ENCODE measurements at regions of chr4 and their contacts with region 1.

Region 1: GRCh38 chr4:2226261-2226660 is 15.7 kb downstream of the HAUS3 start:
- DNase-seq: no peak
- ATAC-seq: no peak
- H3K4me3 ChIP-seq: no peak overlapping the region
- H3K27ac ChIP-seq: no peak overlapping the region
- H3K4me1 ChIP-seq: no peaks in the 10 kb centered on the region
- H3K27me3 ChIP-seq: no peaks in the 10 kb centered on the region
- CTCF ChIP-seq: no peak
- EP300 ChIP-seq: no peak
- POLR2A ChIP-seq: no peak
- RAD21 ChIP-seq: no peak

Region 2: DNA sequence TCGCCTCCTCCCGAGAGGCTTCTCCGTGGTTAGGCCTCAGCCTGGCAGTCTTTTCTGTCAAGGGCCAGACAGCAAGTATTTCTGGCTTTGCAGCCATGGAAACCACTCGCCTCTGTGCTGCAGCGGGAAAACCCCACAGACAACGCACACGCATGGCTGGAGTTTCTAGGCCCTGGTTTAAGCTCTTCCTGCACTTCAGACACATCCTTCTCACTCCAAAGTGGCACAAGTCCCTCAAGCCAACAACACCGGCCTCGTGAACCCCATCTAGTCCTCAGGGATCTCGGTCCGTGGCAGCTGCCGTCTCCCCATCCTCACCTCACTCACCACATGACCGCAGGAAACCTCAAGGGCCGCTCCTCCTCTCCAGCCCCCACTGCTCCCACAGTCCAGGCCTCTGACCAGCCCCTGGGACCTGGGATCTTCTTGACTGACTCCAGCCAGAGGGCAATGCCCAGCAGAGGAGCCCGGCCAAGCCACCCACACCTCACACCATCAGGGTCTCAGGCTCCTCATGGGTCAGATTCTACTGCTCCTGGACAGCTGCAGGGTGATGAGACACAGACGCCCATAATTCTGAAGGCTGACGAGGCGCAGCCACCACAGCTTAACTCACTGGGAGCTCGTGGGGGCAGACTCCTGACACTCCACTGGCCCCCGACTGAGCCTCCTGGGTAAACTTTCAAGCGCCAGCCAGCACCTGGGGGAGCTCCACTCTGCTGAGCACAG is 392.1 kb before region 1 on chr4:
- CTCF ChIA-PET with region 1: no interaction called
- POLR2A ChIA-PET with region 1: no interaction called
- RAD21 ChIA-PET with region 1: no interaction called
- SMC1A ChIA-PET with region 1: no interaction called
- in situ Hi-C with region 1: no loop called
- intact Hi-C with region 1: no loop called
- DNase-seq: peak; percentile 55
- ATAC-seq: peak; percentile 96
- H3K4me3 ChIP-seq: no peak overlapping the region
- H3K27ac ChIP-seq: peak overlapping the region; percentile 87
- H3K4me1 ChIP-seq: peaks cover 30% of the 10 kb centered on the region
- H3K27me3 ChIP-seq: no peaks in the 10 kb centered on the region
- CTCF ChIP-seq: no peak; a peak in 1 of 6 replicates
- EP300 ChIP-seq: no peak
- POLR2A ChIP-seq: peak; percentile 45; the same call in 1 of the 2 replicates
- RAD21 ChIP-seq: no peak

Region 3: DNA sequence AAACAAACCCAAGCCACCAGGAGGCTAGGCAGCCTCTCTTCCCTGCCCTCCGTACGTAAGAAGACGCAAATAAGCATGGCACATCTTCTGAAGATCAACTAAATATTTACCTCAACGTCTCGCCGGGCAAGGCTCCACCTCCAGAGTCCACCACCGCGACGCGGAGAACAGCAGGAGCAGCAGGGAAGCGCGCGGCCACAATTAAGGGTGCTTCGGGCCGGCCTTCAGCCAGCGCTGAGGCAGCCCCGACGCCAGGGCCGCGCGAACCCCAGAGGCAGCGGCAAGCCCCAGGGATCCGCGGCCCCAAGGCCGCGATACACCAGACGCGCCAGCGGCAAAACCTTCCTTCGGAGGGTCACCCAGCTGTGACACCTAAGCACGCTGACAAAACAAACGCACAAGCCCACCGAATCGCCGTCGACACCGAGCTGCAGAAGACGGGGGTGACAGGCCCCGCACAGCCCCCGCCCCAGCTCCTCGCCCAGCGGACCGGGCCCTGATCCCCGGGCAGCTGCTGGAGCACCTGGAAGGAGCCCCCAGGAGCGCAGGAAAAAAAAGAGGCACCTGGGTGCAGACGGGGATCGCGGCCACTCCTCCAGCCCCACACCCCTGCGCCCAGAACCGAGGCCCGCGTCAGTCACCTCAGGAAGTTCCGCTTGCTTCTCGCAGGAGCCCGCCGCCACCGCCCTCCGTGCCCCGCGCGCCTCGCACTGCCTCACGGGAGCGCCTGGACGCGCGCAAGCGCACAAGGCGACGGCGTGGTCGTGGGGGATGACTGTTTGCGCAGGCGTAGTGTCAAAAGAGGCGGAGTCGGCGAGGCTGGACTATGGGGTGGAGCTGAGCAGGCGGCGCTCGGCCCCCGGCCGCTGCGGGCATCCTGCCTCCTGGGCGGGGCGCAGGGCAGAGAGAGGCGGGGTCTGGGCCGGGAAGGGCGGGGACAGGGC is 15.4 kb after region 1 on chr4 and contains the starts of genes HAUS3 and POLN:
- CTCF ChIA-PET with region 1: interaction called, 52 read pairs
- POLR2A ChIA-PET with region 1: interaction called, 12 read pairs
- RAD21 ChIA-PET with region 1: interaction called, 10 read pairs
- SMC1A ChIA-PET with region 1: interaction called, 43 read pairs
- in situ Hi-C with region 1: no loop called
- intact Hi-C with region 1: no loop called
- DNase-seq: peak; percentile 94
- ATAC-seq: peak; percentile 95
- H3K4me3 ChIP-seq: peak within 1 kb of the TSS; percentile 78
- H3K27ac ChIP-seq: peak within 1 kb of the TSS; percentile 70
- H3K4me1 ChIP-seq: peaks cover 6% of the 10 kb centered on the region; the same call in 1 of the 2 replicates
- H3K27me3 ChIP-seq: no peaks in the 10 kb centered on the region
- CTCF ChIP-seq: no peak
- EP300 ChIP-seq: no peak
- POLR2A ChIP-seq: peak; percentile 92
- RAD21 ChIP-seq: no peak
- polyA plus RNA-seq, gene HAUS3: 4.2 to 7.3 TPM
- polyA plus RNA-seq, gene POLN: 0.09 TPM in 1 of 2 experiments, not detected in the other